ENCODE measurements at regions of chr2 and their contacts with region 1.

Region 1: GRCh38 chr2:127591221-127591923 is 54.6 kb upstream of the GPR17 start:
- DNase-seq: peak; percentile 78 to 85 (median 81)
- H3K4me3 ChIP-seq: no peak overlapping the region
- H3K27ac ChIP-seq: no peak overlapping the region
- H3K4me1 ChIP-seq: no peaks in the 10 kb centered on the region
- H3K27me3 ChIP-seq: no peaks in the 10 kb centered on the region

Region 2: DNA sequence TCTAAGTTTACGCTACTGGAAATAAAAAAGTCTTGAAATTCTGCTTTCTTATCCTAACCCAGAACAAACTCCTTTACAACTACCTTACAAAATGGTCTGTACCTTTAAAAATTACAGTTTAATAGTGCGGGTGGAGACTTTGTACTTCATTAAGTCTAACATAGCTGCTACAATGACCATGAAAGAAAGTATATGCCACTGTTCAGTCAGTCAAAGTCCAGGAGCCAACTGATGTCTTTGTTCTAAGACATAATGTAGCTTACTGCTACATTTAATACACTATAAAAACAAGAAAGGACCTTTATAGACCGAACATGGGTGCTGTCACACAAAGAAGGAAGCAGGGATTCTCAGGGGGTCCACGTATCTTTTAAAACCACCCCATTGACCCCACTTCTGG is 101.1 kb before region 1 on chr2:
- CTCF ChIA-PET with region 1: no interaction called
- POLR2A ChIA-PET with region 1: no interaction called
- DNase-seq: no peak
- H3K4me3 ChIP-seq: no peak overlapping the region
- H3K27ac ChIP-seq: no peak overlapping the region
- H3K4me1 ChIP-seq: peaks cover 17 to 27% (median 24%) of the 10 kb centered on the region in 4 experiments
- H3K27me3 ChIP-seq: no peaks in the 10 kb centered on the region

Region 3: GRCh38 chr2:127526149-127527000 is 65.0 kb before region 1 on chr2 and contains the start of gene IWS1:
- CTCF ChIA-PET with region 1: no interaction called
- POLR2A ChIA-PET with region 1: no interaction called
- DNase-seq: peak; percentile 97
- H3K4me3 ChIP-seq: peak within 1 kb of the TSS; percentile 80 to 97 (median 92)
- H3K27ac ChIP-seq: peak within 1 kb of the TSS; percentile 87 to 97
- H3K4me1 ChIP-seq: peaks cover 11 to 21% (median 19%) of the 10 kb centered on the region in 4 experiments
- H3K27me3 ChIP-seq: no peaks in the 10 kb centered on the region

Region 4: GRCh38 chr2:127561371-127561770 is 30.0 kb before region 1 on chr2:
- CTCF ChIA-PET with region 1: no interaction called
- POLR2A ChIA-PET with region 1: no interaction called
- DNase-seq: no peak
- H3K4me3 ChIP-seq: no peak overlapping the region
- H3K27ac ChIP-seq: no peak overlapping the region
- H3K4me1 ChIP-seq: no peaks in the 10 kb centered on the region
- H3K27me3 ChIP-seq: peaks cover 0 to 2% (median 0%) of the 10 kb centered on the region in 5 experiments

Region 5: DNA sequence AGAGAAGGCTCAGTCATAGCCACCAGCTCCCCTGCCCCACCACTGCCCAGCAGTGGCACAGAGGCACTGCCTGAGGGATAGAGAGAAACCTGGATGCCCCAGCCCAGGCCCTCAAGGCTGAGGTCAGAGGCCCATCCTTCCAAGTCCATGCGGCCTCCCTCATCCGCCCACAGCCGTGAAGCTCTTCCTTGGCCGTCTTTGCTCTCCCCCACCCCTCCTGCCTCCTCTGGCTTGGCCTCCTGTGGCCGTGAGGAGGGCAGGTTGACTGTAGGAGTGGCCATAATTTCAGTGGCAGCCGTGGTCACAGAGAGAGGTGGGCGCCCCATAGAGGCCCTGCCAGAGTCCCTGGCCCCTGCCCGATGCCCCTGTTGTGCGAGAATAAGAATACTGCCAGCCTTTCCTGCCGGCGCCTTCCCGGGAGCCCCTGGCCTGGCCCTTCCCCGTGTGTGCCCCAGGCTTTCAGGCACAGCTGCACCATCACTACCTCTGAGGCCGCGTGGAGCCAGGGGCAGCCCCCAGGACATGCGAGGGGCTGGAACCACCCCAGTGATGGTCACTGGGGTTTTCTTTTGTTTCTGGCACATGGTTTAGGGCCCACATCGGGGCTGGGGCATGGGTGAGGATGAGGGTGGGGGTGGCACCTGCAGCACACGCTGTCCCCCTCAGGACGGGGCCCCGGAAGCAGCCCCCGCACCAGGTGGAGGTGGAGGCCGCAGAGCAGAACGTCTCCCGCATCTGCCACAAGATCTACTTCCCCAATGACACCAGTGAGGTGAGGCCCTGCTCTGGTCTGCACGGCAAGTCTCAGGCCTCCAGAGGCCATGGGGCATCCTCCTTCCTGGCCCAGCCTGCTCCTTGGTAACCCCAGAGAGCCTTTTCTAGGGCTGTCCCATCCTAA is 41.5 kb after region 1 on chr2:
- CTCF ChIA-PET with region 1: interaction called, 14 read pairs
- POLR2A ChIA-PET with region 1: no interaction called
- DNase-seq: peak in 1 of 3 donors; percentile 28
- H3K4me3 ChIP-seq: no peak overlapping the region
- H3K27ac ChIP-seq: no peak overlapping the region
- H3K4me1 ChIP-seq: peaks cover 0 to 32% (median 23%) of the 10 kb centered on the region in 4 experiments
- H3K27me3 ChIP-seq: no peaks in the 10 kb centered on the region

Region 6: GRCh38 chr2:127649684-127650040 is 58.3 kb after region 1 on chr2:
- CTCF ChIA-PET with region 1: interaction called, 89 read pairs
- POLR2A ChIA-PET with region 1: no interaction called
- DNase-seq: peak; percentile 78 to 82 (median 79)
- H3K4me3 ChIP-seq: peak overlapping the region in 1 of 7 experiments; percentile 26
- H3K27ac ChIP-seq: no peak overlapping the region
- H3K4me1 ChIP-seq: peaks cover 0 to 42% (median 29%) of the 10 kb centered on the region in 4 experiments
- H3K27me3 ChIP-seq: no peaks in the 10 kb centered on the region

Region 7: GRCh38 chr2:127695491-127696472 is 104.4 kb after region 1 on chr2:
- CTCF ChIA-PET with region 1: interaction called, 35 read pairs
- POLR2A ChIA-PET with region 1: no interaction called
- DNase-seq: peak; percentile 81 to 89 (median 83)
- H3K4me3 ChIP-seq: peak overlapping the region in 3 of 7 experiments; percentile 4 to 38 (median 8)
- H3K27ac ChIP-seq: no peak overlapping the region
- H3K4me1 ChIP-seq: peaks cover 2 to 10% (median 7%) of the 10 kb centered on the region in 4 experiments
- H3K27me3 ChIP-seq: no peaks in the 10 kb centered on the region

Measured in common myeloid progenitor, CD34-positive (primary cell).